CD8-positive, alpha-beta T cell (primary cell): ENCODE measurements at regions of chr5 and their contacts with region 1.

Region 1: DNA sequence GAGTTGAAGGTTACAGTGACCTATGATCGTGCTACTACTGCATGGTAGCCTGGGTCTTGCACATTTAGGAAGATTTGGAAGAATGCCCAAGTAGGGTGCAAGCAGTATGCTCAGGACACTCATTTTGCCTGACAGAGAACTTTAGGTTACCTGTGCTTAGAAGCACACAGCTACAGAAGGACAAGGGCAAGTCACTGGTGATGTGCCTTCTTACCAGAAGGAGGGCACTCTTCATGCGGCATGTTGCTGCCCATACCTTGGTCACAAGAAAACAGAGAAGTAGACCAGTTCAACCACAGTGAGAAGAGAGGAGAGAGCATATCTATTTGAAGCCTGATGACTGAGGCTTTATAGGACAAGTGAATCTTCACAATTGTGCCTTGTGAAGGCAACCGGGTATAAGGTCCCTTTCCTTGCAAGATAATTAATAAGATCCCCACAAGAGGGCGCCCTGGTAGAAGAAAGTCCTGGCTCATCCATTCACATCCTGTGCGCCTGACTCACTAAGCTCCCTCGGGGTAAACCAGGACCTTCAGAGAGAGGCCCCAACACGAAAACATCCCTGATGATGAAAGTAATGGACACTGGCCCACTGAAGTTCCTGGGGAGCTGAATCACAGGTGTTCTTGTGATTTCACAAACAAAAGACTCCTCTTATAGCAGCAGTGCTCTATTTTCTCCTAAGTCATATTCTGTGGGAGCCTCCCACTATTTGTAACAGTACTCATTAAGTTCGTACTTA is 38.1 kb upstream of the STARD4 start:
- DNase-seq: peak; percentile 35 to 80 (median 72)
- ATAC-seq: peak; percentile 91
- H3K4me3 ChIP-seq: no peak overlapping the region
- H3K4me3 Mint-ChIP-seq: no peak overlapping the region
- H3K27ac ChIP-seq: no peak overlapping the region
- H3K27ac Mint-ChIP-seq: no peak overlapping the region
- H3K4me1 ChIP-seq: peaks cover 3% of the 10 kb centered on the region
- H3K4me1 Mint-ChIP-seq: peaks cover 13% of the 10 kb centered on the region
- H3K27me3 ChIP-seq: peaks cover 0 to 2% of the 10 kb centered on the region in 2 experiments
- H3K27me3 Mint-ChIP-seq: peaks cover 2% of the 10 kb centered on the region
- CTCF ChIP-seq: peak; percentile 69

Region 2: DNA sequence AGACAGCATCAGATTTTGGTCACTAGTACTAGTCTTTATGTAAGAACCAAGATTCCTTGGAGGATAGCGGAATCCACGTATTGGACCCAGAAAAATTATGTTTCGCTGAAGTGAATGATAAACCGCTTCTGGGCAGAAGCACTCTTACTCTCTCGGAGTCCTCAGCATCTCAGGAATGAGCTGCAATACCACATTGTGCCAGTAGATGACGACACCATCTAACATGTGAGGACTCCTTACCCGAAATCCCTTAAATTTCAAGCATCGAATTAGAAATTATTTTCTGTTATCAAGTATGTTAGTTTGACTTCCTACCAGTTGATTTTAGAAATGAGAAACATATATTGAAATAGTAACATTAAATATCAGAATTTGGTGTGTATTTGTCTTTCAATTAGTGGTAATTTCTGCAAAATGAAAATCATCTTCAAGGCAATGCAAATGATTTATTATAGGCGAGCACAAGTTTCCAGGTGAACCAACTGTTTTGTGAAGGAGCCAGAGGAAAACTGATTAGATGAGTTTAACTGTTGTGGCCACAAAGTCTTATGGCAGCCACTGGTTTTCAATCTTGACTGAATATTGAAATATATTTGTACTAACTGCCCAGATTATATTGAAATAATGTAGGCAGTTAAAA is 392.2 kb before region 1 on chr5:
- CTCF ChIA-PET with region 1: interaction called, 3 read pairs
- POLR2A ChIA-PET with region 1: no interaction called
- intact Hi-C with region 1: loop called in 1 of 2 experiments (anchors 1 kb)
- DNase-seq: peak; percentile 59 to 87 (median 83)
- ATAC-seq: peak; percentile 99
- H3K4me3 ChIP-seq: no peak overlapping the region
- H3K4me3 Mint-ChIP-seq: no peak overlapping the region
- H3K27ac ChIP-seq: no peak overlapping the region
- H3K27ac Mint-ChIP-seq: no peak overlapping the region
- H3K4me1 ChIP-seq: no peaks in the 10 kb centered on the region
- H3K4me1 Mint-ChIP-seq: peaks cover 3% of the 10 kb centered on the region
- H3K27me3 ChIP-seq: no peaks in the 10 kb centered on the region
- H3K27me3 Mint-ChIP-seq: peaks cover 3% of the 10 kb centered on the region
- CTCF ChIP-seq: peak; percentile 100

Region 3: GRCh38 chr5:111563031-111563822 is 12.8 kb after region 1 on chr5:
- CTCF ChIA-PET with region 1: interaction called, 11 read pairs
- POLR2A ChIA-PET with region 1: no interaction called
- intact Hi-C with region 1: no loop called
- DNase-seq: no peak
- ATAC-seq: no peak
- H3K4me3 ChIP-seq: no peak overlapping the region
- H3K4me3 Mint-ChIP-seq: no peak overlapping the region
- H3K27ac ChIP-seq: no peak overlapping the region
- H3K27ac Mint-ChIP-seq: no peak overlapping the region
- H3K4me1 ChIP-seq: no peaks in the 10 kb centered on the region
- H3K4me1 Mint-ChIP-seq: no peaks in the 10 kb centered on the region
- H3K27me3 ChIP-seq: no peaks in the 10 kb centered on the region
- H3K27me3 Mint-ChIP-seq: peaks cover 12% of the 10 kb centered on the region
- CTCF ChIP-seq: no peak

Region 4: GRCh38 chr5:111840036-111840674 is 289.7 kb after region 1 on chr5:
- CTCF ChIA-PET with region 1: no interaction called
- POLR2A ChIA-PET with region 1: no interaction called
- intact Hi-C with region 1: loop called (anchors 5 to 10 kb)
- DNase-seq: no peak
- ATAC-seq: no peak
- H3K4me3 ChIP-seq: no peak overlapping the region
- H3K4me3 Mint-ChIP-seq: no peak overlapping the region
- H3K27ac ChIP-seq: no peak overlapping the region
- H3K27ac Mint-ChIP-seq: no peak overlapping the region
- H3K4me1 ChIP-seq: no peaks in the 10 kb centered on the region
- H3K4me1 Mint-ChIP-seq: no peaks in the 10 kb centered on the region
- H3K27me3 ChIP-seq: no peaks in the 10 kb centered on the region
- H3K27me3 Mint-ChIP-seq: no peaks in the 10 kb centered on the region
- CTCF ChIP-seq: no peak

Region 5: DNA sequence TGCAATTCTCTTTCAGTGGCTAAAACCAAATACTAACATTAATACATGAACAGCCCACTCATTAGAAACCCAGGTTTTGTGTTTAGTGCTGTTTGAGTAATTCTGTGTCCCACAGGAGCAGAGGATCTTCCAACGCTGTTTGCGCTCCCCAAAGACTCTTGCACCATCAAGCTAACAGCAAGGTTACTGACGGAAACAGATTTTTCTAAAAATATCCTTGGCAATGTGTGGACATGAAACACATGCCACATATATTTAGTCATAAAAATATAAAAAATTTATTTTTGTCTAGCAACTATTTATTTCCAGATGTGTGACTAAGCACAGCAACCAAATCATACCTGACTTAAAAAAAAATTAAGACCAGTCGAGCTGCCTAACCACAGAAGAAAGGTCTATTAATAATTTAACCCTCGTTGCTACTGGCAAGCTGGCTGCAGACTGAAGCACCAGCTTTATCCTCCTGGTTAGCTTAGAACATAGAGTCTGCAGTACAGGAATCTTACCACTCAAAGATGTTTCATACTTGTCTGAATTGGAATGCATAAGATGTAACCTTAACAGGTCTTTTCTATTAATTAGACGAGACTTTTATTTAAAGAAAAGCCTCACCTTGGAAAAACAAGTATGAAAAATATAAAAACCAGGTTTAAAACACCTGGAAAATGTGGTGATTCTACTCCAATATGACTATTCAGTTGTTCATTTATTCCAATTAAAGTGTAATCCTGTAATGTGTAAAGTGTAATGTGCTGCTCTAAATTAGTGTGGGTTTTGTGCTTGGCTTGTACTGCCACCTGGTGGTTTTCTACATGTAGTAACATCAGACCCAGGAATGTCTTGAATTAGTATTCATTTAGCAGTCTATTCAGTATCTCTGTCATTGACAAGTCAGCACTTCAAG is 596.1 kb after region 1 on chr5:
- CTCF ChIA-PET with region 1: interaction called, 47 read pairs
- POLR2A ChIA-PET with region 1: no interaction called
- intact Hi-C with region 1: loop called (anchors 1 kb)
- DNase-seq: peak; percentile 17 to 78 (median 58)
- ATAC-seq: peak; percentile 95
- H3K4me3 ChIP-seq: no peak overlapping the region
- H3K4me3 Mint-ChIP-seq: no peak overlapping the region
- H3K27ac ChIP-seq: no peak overlapping the region
- H3K27ac Mint-ChIP-seq: no peak overlapping the region
- H3K4me1 ChIP-seq: no peaks in the 10 kb centered on the region
- H3K4me1 Mint-ChIP-seq: no peaks in the 10 kb centered on the region
- H3K27me3 ChIP-seq: no peaks in the 10 kb centered on the region
- H3K27me3 Mint-ChIP-seq: peaks cover 16% of the 10 kb centered on the region
- CTCF ChIP-seq: peak; percentile 85